ENCODE measurements at regions of chr19 and their contacts with region 1.

Region 1: DNA sequence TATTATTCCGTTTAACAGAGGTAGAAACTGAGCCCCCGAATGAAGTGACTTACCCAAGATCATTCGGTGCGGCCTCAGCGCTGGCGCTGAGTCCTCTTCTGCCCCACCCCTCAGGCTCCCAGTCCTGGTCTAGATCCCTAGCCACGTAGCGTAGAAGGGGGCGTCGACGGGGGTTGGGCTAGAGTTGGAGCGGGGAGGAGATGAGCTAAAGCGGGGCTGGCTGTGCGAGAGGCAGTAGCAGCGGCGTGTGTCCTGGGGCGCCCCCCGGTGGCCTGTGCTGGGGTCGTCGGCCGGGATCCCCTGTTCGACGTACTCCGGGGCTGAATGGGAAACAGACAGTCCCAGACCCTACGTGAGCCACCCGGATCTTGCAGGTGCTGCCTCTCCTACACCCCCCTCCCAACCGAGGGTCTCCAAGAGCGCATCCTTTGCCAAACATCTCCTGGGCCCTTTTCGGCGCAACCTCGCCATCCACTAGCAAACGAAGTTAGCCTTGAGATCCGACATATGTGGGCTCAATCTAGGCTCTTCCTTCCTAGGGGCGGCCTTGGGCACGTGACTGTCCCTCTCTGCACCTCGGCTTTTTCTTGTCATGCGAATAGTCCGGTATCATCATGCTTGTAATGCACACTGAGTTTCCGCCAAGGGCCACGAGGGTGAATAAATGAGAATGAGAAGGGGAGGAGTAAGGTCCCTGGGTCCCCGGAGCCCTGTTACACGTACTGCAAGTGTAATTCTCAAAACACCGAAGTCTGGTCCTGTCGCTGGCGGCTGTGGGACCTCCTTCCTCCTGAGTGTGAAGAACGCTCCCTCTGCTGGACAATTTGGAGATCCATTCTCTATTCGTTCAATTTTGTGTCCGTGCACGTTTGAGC is 47.7 kb downstream of the CYP4F22 start:
- DNase-seq: peak; percentile 88
- ATAC-seq: peak; percentile 90
- H3K4me3 Mint-ChIP-seq: peak overlapping the region; percentile 83
- H3K27ac Mint-ChIP-seq: peak overlapping the region; percentile 73
- H3K4me1 Mint-ChIP-seq: peaks cover 17% of the 10 kb centered on the region
- H3K27me3 Mint-ChIP-seq: peaks cover 9% of the 10 kb centered on the region
- CTCF ChIP-seq: peak; percentile 33

Region 2: GRCh38 chr19:14871619-14872230 is 684.3 kb before region 1 on chr19:
- CTCF ChIA-PET with region 1: no interaction called
- POLR2A ChIA-PET with region 1: no interaction called
- intact Hi-C with region 1: loop called (anchors 5 kb)
- DNase-seq: no peak
- ATAC-seq: no peak
- H3K4me3 Mint-ChIP-seq: no peak overlapping the region
- H3K27ac Mint-ChIP-seq: no peak overlapping the region
- H3K4me1 Mint-ChIP-seq: no peaks in the 10 kb centered on the region
- H3K27me3 Mint-ChIP-seq: peaks cover 22% of the 10 kb centered on the region
- CTCF ChIP-seq: peak; percentile 38

Region 3: GRCh38 chr19:14954071-14954659 is 601.8 kb before region 1 on chr19:
- CTCF ChIA-PET with region 1: no interaction called
- POLR2A ChIA-PET with region 1: no interaction called
- intact Hi-C with region 1: no loop called
- DNase-seq: no peak
- ATAC-seq: no peak
- H3K4me3 Mint-ChIP-seq: no peak overlapping the region
- H3K27ac Mint-ChIP-seq: no peak overlapping the region
- H3K4me1 Mint-ChIP-seq: no peaks in the 10 kb centered on the region
- H3K27me3 Mint-ChIP-seq: peaks cover 9% of the 10 kb centered on the region
- CTCF ChIP-seq: no peak

Region 4: GRCh38 chr19:15125232-15126067 is 430.5 kb before region 1 on chr19:
- CTCF ChIA-PET with region 1: no interaction called
- POLR2A ChIA-PET with region 1: no interaction called
- intact Hi-C with region 1: loop called (anchors 1 kb)
- DNase-seq: peak; percentile 96
- ATAC-seq: peak; percentile 88
- H3K4me3 Mint-ChIP-seq: peak overlapping the region; percentile 95
- H3K27ac Mint-ChIP-seq: peak overlapping the region; percentile 91
- H3K4me1 Mint-ChIP-seq: peaks cover 17% of the 10 kb centered on the region
- H3K27me3 Mint-ChIP-seq: peaks cover 4% of the 10 kb centered on the region
- CTCF ChIP-seq: no peak

Region 5: DNA sequence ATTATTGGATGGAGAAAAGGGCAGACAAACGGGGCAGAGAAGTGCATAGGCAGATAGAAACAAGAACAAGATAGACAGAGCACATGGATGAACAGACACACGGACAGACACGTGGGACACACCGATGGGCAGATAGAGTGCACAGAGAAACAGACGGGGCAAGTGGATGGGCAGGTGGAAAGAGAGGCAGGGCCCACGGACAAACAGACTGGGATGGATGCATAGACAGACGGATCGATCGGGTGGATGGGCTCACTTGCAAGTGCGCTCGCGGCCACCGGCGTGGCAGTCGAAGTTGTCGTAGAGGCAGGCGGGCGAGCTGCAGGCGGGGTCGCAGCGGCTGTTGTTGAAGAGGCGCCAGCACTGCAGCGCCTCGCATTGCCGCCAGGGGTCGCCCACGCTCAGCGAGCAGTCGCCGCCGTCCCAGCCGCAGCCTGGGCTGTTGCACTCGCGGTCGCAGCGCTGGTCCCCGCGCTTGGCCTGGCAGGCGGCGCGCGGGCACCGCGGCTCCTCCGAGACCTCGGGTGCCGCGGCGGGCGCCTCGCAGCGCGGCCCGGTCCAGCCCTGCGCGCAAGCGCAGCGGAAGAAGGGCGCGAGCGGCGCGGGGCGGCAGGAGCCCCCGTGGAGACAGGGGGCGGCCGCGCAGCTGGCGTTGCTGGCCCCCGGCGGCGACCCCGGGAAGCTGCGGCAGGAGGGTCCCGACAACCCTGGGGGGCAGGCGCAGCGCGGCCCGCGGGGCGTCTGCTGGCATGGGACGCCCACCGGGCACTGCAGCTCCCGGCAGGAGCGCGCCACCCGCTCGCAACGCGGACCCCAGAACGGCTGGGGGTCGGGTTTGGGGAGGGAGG is 378.5 kb before region 1 on chr19:
- CTCF ChIA-PET with region 1: interaction called, 10 read pairs
- POLR2A ChIA-PET with region 1: interaction called, 10 read pairs
- intact Hi-C with region 1: loop called (anchors 1 kb)
- DNase-seq: peak; percentile 87
- ATAC-seq: peak; percentile 98
- H3K4me3 Mint-ChIP-seq: no peak overlapping the region
- H3K27ac Mint-ChIP-seq: no peak overlapping the region
- H3K4me1 Mint-ChIP-seq: peaks cover 4% of the 10 kb centered on the region
- H3K27me3 Mint-ChIP-seq: peaks cover 16% of the 10 kb centered on the region
- CTCF ChIP-seq: peak; percentile 80

Region 6: GRCh38 chr19:15379083-15379995 is 176.7 kb before region 1 on chr19 and contains the start of gene AKAP8:
- CTCF ChIA-PET with region 1: interaction called, 4 read pairs
- POLR2A ChIA-PET with region 1: interaction called, 3 read pairs
- intact Hi-C with region 1: loop called (anchors 2 kb)
- DNase-seq: peak; percentile 96
- ATAC-seq: peak; percentile 91
- H3K4me3 Mint-ChIP-seq: peak within 1 kb of the TSS; percentile 100
- H3K27ac Mint-ChIP-seq: peak within 1 kb of the TSS; percentile 99
- H3K4me1 Mint-ChIP-seq: peaks cover 43% of the 10 kb centered on the region
- H3K27me3 Mint-ChIP-seq: no peaks in the 10 kb centered on the region
- CTCF ChIP-seq: no peak
- total RNA-seq, gene AKAP8: 74.8 and 79.0 TPM in 2 replicates

Region 7: DNA sequence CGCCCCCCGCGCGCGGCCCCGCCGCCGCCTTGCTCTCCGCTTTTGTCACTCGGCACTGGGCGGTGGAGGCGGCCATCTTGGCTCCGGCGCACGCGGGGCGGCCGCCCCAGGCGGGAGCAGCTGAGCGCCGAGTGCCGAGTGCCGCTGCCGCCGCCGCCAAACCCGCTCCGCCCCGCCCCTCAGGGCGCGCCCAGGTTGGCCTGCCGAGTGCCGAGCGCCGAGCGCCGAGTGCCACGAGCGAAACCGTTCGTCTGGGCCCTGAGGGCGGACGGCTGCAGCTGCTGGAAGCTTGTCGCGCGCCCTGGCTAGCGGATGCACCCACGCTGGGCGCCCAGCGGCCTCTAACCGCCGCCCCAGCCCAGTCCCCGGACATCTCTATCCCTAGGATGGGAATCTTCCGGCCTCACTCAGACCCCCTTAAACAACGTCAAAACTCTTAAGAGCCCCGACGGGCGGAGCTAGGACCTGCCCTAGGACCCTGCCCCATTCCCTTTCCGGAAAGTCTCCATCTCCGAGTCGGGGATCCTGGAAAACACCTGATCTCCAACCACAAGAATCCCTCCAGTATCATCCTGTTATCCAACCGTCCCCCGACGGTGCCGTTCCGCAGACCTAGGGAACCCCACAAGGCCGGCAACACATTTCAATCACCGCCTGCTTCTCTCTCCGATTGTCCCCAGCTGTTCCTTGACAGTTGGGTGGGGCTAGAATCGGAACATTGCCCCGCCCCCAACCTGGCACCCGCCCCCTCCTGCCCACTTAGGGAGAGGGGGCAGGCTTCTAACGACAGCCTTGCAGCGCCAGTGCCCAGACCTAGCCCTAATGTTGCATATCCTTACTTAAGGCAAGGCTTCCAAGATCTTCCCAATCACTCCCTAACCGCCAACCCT is 123.1 kb before region 1 on chr19:
- CTCF ChIA-PET with region 1: interaction called, 4 read pairs
- POLR2A ChIA-PET with region 1: no interaction called
- intact Hi-C with region 1: loop called (anchors 1 kb)
- DNase-seq: peak; percentile 92
- ATAC-seq: peak; percentile 89
- H3K4me3 Mint-ChIP-seq: peak overlapping the region; percentile 97
- H3K27ac Mint-ChIP-seq: peak overlapping the region; percentile 93
- H3K4me1 Mint-ChIP-seq: peaks cover 31% of the 10 kb centered on the region
- H3K27me3 Mint-ChIP-seq: no peaks in the 10 kb centered on the region
- CTCF ChIP-seq: no peak

Region 8: GRCh38 chr19:15587663-15588062 is 31.7 kb after region 1 on chr19:
- CTCF ChIA-PET with region 1: no interaction called
- POLR2A ChIA-PET with region 1: no interaction called
- intact Hi-C with region 1: no loop called
- DNase-seq: no peak
- ATAC-seq: no peak
- H3K4me3 Mint-ChIP-seq: no peak overlapping the region
- H3K27ac Mint-ChIP-seq: no peak overlapping the region
- H3K4me1 Mint-ChIP-seq: peaks cover 6% of the 10 kb centered on the region
- H3K27me3 Mint-ChIP-seq: peaks cover 24% of the 10 kb centered on the region
- CTCF ChIP-seq: no peak

Region 9: GRCh38 chr19:15629003-15629880 is 73.2 kb after region 1 on chr19:
- CTCF ChIA-PET with region 1: no interaction called
- POLR2A ChIA-PET with region 1: no interaction called
- intact Hi-C with region 1: no loop called
- DNase-seq: peak; percentile 78
- ATAC-seq: peak; percentile 98
- H3K4me3 Mint-ChIP-seq: no peak overlapping the region
- H3K27ac Mint-ChIP-seq: no peak overlapping the region
- H3K4me1 Mint-ChIP-seq: peaks cover 11% of the 10 kb centered on the region
- H3K27me3 Mint-ChIP-seq: peaks cover 9% of the 10 kb centered on the region
- CTCF ChIP-seq: no peak